Left ventricle myocardium superior (tissue), 1 donor: ENCODE measurements at regions of chr12 and their contacts with region 1.

Region 1: DNA sequence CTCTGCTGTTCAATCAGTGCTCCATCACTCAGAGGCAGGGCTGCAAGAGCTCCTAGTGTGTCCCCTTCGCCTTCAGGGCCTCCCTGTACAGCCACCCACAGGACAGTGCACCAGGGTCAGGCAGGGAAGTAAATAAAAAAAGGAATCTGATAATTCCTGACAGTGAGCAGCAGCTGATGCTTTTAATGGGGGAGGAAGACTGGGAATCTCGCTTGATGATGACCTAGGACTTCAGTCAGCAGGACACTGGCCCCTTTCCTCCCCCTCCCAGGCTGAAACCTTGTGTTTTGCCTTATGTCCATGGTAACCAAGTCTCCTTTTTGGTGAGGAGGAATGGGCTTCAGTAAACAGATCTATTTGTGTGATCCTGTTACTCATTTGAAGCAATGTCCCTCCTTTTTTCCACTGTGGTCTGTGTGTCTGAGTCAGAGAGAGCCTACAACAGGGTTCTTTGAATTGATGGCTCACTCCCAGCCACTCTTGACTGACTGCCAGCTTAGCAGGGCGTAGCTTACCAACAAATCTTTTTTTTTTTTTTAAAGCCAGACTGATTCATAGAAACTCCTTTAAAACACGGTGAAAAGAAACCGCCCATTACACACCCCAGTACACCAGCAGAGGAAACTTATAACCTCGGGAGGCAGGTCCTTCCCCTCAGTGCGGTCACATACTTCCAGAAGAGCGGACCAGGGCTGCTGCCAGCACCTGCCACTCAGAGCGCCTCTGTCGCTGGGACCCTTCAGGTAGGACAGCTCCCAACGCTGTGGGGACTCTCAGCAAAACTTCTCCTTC is at the start of gene EMP1:
- DNase-seq: peak; percentile 88
- ATAC-seq: peak; percentile 87
- total RNA-seq, gene EMP1: 76.8 TPM

Region 2: DNA sequence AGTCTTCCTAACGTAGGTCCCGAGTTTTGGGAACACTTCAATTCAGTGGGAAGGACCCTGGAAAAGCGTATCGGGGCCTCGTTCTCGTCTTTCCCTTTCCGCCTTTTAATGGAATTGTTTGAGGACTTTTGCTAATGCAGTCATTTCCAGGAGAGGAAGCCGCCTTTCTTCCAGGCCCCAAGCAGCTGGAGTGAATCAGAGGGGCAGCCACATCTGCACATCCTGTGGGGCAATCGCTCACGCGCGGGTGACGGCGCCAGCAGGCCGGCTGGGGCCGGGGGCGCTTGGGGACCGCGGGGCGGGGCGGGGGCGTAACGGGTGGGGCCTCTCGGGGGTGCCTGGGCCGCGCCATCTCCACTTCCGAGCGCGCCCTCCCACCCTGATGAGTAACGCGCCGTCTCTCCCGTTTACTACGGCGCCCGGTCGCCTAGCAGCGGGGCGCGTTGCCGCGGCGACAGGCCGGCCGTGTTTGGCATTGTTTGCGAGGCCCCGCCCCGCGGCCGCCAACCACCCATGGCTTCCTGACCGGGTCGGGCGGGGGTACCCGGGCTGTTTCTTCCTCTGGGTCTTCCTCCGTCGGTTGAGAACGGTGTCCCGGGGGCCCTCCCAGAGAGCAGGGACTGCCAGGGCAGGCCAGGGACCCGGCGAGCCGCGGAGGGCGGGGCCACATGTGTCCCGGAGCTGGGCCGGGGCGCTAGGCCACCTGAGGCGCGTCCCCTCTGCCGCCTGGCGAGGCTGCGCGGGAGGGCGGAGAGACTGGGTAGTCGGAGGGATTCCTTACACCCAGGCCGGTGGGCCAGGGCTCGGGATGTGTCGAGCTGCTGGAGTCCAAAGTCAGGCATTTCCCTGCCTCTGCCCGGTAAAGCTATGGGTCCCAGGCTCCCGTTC is 95.2 kb before region 1 on chr12:
- intact Hi-C with region 1: loop called (anchors 5 kb)
- DNase-seq: peak; percentile 95
- ATAC-seq: peak; percentile 86

Region 3: GRCh38 chr12:13587721-13588390 is 391.5 kb after region 1 on chr12:
- intact Hi-C with region 1: no loop called
- DNase-seq: no peak
- ATAC-seq: no peak